ENCODE measurements at regions of chr14 and their contacts with region 1.

Region 1: GRCh38 chr14:95993768-95994592 is 45.2 kb upstream of the C14orf132 start:
- DNase-seq: peak; percentile 41 to 52
- ATAC-seq: peak; percentile 50 to 79; a peak in 4 of 6 replicates
- H3K4me3 ChIP-seq: no peak overlapping the region
- H3K27ac ChIP-seq: no peak overlapping the region
- H3K4me1 ChIP-seq: no peaks in the 10 kb centered on the region
- CTCF ChIP-seq: peak; percentile 88
- EP300 ChIP-seq: no peak
- POLR2A ChIP-seq: no peak
- RAD21 ChIP-seq: peak; percentile 91

Region 2: DNA sequence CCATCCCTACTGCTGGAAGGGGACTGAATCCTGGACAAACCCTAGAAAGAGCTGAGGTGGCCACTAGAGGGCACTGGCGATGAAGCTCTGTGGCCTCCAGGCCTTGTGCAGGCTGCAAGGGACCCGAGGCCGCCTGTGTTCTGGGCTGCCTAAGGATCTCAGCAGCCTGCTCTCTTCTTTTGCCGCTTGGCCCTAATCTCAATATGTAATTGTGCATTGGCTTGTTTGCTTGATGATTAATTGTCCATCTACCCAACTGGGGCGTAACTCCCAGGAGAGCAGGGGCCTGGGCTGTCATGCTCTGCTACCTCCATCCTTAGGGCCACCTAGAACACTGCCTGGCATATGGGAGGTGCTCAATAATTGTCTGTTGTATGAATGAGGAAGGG is 551.4 kb before region 1 on chr14:
- CTCF ChIA-PET with region 1: interaction called, 22 read pairs
- POLR2A ChIA-PET with region 1: no interaction called
- DNase-seq: peak; percentile 69 to 91
- ATAC-seq: peak; percentile 90 to 98
- H3K4me3 ChIP-seq: no peak overlapping the region
- H3K27ac ChIP-seq: no peak overlapping the region
- H3K4me1 ChIP-seq: no peaks in the 10 kb centered on the region
- CTCF ChIP-seq: peak; percentile 83
- EP300 ChIP-seq: no peak
- POLR2A ChIP-seq: no peak
- RAD21 ChIP-seq: peak; percentile 82 to 90

Region 3: DNA sequence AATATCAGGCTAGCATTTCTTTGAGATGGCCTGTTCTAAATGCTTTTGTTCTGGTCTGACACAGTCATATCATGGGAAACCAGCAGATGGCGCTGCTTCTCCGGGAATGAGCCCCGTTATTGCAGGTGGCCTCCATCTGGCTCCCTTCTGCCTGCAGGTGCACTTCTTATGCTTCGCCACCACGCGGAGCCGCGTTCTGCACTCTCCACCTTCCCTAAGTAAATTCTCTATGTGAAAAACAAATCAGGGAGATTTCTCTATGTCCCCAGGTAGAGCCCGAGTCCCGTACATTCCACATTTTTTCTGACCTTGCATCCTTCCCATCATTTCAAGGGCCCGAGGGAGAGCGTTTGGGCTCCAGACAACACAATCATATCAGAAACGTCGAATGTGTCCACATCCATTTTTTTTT is 433.0 kb before region 1 on chr14:
- CTCF ChIA-PET with region 1: interaction called, 145 read pairs
- POLR2A ChIA-PET with region 1: no interaction called
- DNase-seq: peak; percentile 78 to 88
- ATAC-seq: peak; percentile 98 to 99
- H3K4me3 ChIP-seq: no peak overlapping the region
- H3K27ac ChIP-seq: no peak overlapping the region
- H3K4me1 ChIP-seq: no peaks in the 10 kb centered on the region
- CTCF ChIP-seq: peak; percentile 98
- EP300 ChIP-seq: no peak
- POLR2A ChIP-seq: no peak
- RAD21 ChIP-seq: peak; percentile 98

Region 4: DNA sequence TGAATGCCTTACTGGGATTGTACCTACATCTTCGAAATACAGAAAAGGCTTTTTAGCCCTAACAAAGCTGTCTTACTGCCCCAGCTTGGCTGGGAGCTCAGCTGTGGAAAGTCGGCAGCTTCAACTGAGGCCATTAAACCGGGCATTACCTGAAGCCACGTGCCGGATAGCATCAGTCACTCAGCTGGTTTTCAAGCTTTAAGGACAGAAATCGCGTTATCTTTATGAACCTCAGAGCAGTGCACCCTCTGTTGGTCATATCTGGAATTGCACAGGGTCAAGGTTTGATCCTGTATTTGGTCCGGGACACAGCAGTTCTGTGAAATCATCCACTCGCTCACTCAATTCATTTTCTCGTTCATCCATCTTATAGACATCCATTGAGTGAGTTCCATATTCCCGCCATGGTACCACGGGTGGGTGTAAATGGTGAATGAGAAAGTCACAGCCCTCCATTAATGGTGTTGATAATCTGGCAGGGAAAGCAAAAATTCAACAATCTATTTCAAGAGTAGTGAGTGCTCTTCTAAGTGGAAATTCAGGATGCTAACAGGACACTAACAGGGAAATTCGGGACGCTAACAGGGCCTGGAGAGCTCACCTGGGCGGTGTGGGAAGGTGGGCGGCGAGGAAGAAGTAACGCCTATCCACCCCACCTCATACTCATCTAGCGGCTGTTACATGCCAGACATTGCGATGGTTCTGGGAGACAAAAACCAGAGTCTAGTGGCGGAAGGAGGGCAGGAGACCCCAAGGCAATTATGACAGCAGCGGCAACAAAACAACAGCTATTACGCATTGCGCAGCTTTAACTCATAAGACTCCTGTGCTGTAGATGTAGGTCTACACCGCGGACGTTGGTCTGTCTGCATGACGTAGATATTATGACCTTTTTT is 219.5 kb before region 1 on chr14:
- CTCF ChIA-PET with region 1: interaction called, 11 read pairs
- POLR2A ChIA-PET with region 1: no interaction called
- DNase-seq: peak; percentile 46 to 57
- ATAC-seq: peak; percentile 70 to 80; a peak in 3 of 6 replicates
- H3K4me3 ChIP-seq: no peak overlapping the region
- H3K27ac ChIP-seq: no peak overlapping the region
- H3K4me1 ChIP-seq: no peaks in the 10 kb centered on the region
- CTCF ChIP-seq: peak; percentile 76
- EP300 ChIP-seq: no peak
- POLR2A ChIP-seq: no peak
- RAD21 ChIP-seq: peak; percentile 54 to 58; a peak in 4 of 5 replicates

Region 5: GRCh38 chr14:95876761-95877538 is 117.0 kb before region 1 on chr14 and contains the start of gene TUNAR:
- CTCF ChIA-PET with region 1: no interaction called
- POLR2A ChIA-PET with region 1: no interaction called
- DNase-seq: no peak
- ATAC-seq: no peak
- H3K4me3 ChIP-seq: no peak within 1 kb of the TSS
- H3K27ac ChIP-seq: no peak within 1 kb of the TSS
- H3K4me1 ChIP-seq: no peaks in the 10 kb centered on the region
- CTCF ChIP-seq: no peak
- EP300 ChIP-seq: no peak
- POLR2A ChIP-seq: no peak
- RAD21 ChIP-seq: no peak
- polyA plus RNA-seq, gene TUNAR: not detected in 2 replicates

Region 6: DNA sequence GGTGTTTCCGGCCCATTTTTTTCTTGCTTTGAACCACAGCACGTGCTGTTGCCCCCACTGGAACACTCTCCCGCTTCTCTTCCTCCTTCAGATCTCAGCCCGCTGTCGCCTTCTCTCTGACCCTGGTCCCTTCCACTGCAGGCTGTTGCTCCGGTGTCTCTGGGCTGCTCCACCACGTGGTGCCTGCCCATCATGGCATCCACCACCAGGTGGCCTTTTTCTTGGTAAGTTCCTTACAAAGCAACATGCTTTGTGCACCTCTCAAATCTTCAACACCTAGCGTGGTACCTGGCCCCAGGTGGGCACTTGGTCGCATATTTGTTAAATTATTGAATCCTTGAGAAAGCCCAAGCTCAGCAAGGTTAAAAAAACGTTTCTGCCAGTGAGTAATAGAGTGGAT is 98.3 kb before region 1 on chr14:
- CTCF ChIA-PET with region 1: interaction called, 11 read pairs
- POLR2A ChIA-PET with region 1: no interaction called
- DNase-seq: peak; percentile 48 to 64
- ATAC-seq: peak; percentile 63 to 89; a peak in 5 of 6 replicates
- H3K4me3 ChIP-seq: no peak overlapping the region
- H3K27ac ChIP-seq: no peak overlapping the region
- H3K4me1 ChIP-seq: peaks cover 12% of the 10 kb centered on the region; the same call in 2 of the 3 replicates
- CTCF ChIP-seq: peak; percentile 34; the same call in 2 of the 3 replicates
- EP300 ChIP-seq: no peak
- POLR2A ChIP-seq: no peak
- RAD21 ChIP-seq: peak in 1 of 2 experiments; percentile 21; a peak in 1 of 5 replicates

Region 7: GRCh38 chr14:95979339-95980042 is 14.5 kb before region 1 on chr14:
- CTCF ChIA-PET with region 1: interaction called, 46 read pairs
- POLR2A ChIA-PET with region 1: no interaction called
- DNase-seq: no peak
- ATAC-seq: peak in 1 of 2 experiments; percentile 38; a peak in 2 of 6 replicates
- H3K4me3 ChIP-seq: no peak overlapping the region
- H3K27ac ChIP-seq: no peak overlapping the region
- H3K4me1 ChIP-seq: no peaks in the 10 kb centered on the region
- CTCF ChIP-seq: no peak
- EP300 ChIP-seq: no peak
- POLR2A ChIP-seq: no peak
- RAD21 ChIP-seq: no peak; a peak in 1 of 5 replicates

Region 8: GRCh38 chr14:96011607-96012006 is 17.6 kb after region 1 on chr14:
- CTCF ChIA-PET with region 1: interaction called, 27 read pairs
- POLR2A ChIA-PET with region 1: no interaction called
- DNase-seq: no peak
- ATAC-seq: no peak
- H3K4me3 ChIP-seq: no peak overlapping the region
- H3K27ac ChIP-seq: no peak overlapping the region
- H3K4me1 ChIP-seq: no peaks in the 10 kb centered on the region
- CTCF ChIP-seq: no peak
- EP300 ChIP-seq: no peak
- POLR2A ChIP-seq: no peak
- RAD21 ChIP-seq: no peak

Region 9: GRCh38 chr14:96735526-96735925 is 741.5 kb after region 1 on chr14:
- CTCF ChIA-PET with region 1: no interaction called
- POLR2A ChIA-PET with region 1: no interaction called
- DNase-seq: no peak
- ATAC-seq: no peak
- H3K4me3 ChIP-seq: no peak overlapping the region
- H3K27ac ChIP-seq: no peak overlapping the region
- H3K4me1 ChIP-seq: no peaks in the 10 kb centered on the region
- CTCF ChIP-seq: no peak
- EP300 ChIP-seq: no peak
- POLR2A ChIP-seq: no peak
- RAD21 ChIP-seq: no peak

Measured in A549 (cell line).